ENCODE measurements at regions of chr12 and their contacts with region 1.

Region 1: DNA sequence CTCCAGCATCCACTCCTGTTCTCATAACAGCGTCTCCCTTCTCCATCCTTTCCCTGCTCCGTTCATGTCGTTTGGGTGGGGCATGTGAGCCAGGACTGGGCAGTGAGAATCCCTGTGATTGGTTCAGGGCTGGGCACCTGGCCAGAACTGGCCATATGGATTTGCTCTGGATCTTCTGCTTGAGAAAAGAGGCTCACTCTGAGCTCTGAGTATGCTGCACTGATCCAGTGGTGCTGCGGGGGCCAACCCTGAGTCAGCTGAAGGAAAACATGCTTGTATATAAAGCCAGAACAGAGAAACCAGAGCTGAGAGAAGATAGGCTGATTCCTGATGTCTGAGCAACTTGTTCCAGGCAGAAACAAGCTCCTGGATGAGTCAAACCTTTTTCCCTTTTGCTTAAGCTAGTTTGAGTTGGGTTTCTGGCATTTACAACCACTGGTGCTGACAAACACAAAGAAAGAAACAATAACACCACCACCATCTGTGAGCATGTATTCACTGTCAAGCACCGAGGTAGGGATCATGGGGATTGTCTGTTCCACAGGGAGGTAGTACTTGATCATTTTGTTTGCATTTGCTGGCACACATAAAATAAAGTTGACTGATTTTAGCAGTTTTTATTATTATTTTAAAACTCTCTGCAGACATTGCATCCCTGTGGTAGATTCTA is 14.0 kb upstream of the HPD start:
- DNase-seq: no peak
- H3K4me3 ChIP-seq: no peak overlapping the region
- H3K27ac ChIP-seq: no peak overlapping the region
- H3K4me1 ChIP-seq: no peaks in the 10 kb centered on the region
- H3K27me3 ChIP-seq: no peaks in the 10 kb centered on the region
- CTCF ChIP-seq: no peak
- EP300 ChIP-seq: no peak
- POLR2A ChIP-seq: no peak
- RAD21 ChIP-seq: no peak

Region 2: GRCh38 chr12:121816930-121817647 is 55.6 kb before region 1 on chr12:
- CTCF ChIA-PET with region 1: no interaction called
- POLR2A ChIA-PET with region 1: no interaction called
- DNase-seq: no peak
- H3K4me3 ChIP-seq: no peak overlapping the region
- H3K27ac ChIP-seq: no peak overlapping the region
- H3K4me1 ChIP-seq: peaks cover 0 to 9% (median 0%) of the 10 kb centered on the region in 4 experiments; a peak in 3 of 7 replicates
- H3K27me3 ChIP-seq: no peaks in the 10 kb centered on the region
- CTCF ChIP-seq: no peak
- EP300 ChIP-seq: no peak
- POLR2A ChIP-seq: no peak
- RAD21 ChIP-seq: no peak

Region 3: GRCh38 chr12:121858662-121859572 is 13.8 kb before region 1 on chr12 and contains the start of gene HPD:
- CTCF ChIA-PET with region 1: interaction called, 11 read pairs
- POLR2A ChIA-PET with region 1: interaction called, 4 read pairs
- DNase-seq: no peak
- H3K4me3 ChIP-seq: no peak within 1 kb of the TSS
- H3K27ac ChIP-seq: peak within 1 kb of the TSS; percentile 21; the same call in 1 of the 2 replicates
- H3K4me1 ChIP-seq: peaks cover 0 to 17% (median 11%) of the 10 kb centered on the region in 4 experiments; a peak in 5 of 7 replicates
- H3K27me3 ChIP-seq: no peaks in the 10 kb centered on the region; a peak in 1 of 7 replicates
- CTCF ChIP-seq: no peak
- EP300 ChIP-seq: no peak
- POLR2A ChIP-seq: no peak
- RAD21 ChIP-seq: no peak
- total RNA-seq, gene HPD: 0.38 and 0.56 TPM in 2 replicates

Region 4: DNA sequence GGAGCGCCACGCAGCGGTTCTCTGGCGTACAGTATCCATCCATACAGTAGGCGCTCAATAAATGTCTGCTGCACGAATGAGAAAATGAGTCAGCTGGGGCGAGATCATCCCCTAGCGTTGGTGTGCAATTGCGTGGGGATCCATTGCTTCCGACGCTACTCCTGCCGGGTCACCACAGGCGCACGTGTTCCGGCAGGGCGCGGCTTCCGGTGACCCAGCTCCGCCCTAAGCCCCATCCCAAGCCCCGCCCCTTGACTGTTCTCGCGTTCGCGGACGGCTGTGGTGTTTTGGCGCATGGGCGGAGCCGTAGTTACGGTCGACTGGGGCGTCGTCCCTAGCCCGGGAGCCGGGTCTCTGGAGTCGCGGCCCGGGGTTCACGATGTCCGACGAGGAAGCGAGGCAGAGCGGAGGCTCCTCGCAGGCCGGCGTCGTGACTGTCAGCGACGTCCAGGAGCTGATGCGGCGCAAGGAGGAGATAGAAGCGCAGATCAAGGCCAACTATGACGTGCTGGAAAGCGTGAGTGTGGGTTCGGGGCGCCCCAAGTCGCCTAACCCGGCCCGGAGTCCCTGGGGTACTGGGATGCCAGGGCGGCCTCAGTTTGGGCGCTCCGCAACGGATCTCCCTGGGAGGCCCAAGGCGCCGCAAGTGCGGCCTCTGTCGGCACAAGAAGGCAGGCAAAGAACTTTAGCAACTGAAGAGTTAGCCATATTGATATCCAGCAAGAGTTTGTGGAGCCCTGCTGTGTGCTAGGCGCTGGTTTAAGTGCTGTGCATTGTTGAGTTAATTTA is 16.0 kb after region 1 on chr12 and contains the start of gene PSMD9:
- CTCF ChIA-PET with region 1: interaction called, 10 read pairs
- POLR2A ChIA-PET with region 1: interaction called, 3 read pairs
- DNase-seq: peak; percentile 94 to 99
- H3K4me3 ChIP-seq: peak within 1 kb of the TSS; percentile 64 to 79 (median 74)
- H3K27ac ChIP-seq: peak within 1 kb of the TSS; percentile 83; the same call in 1 of the 2 replicates
- H3K4me1 ChIP-seq: peaks cover 0 to 5% (median 1%) of the 10 kb centered on the region in 4 experiments; a peak in 4 of 7 replicates
- H3K27me3 ChIP-seq: peaks cover 0 to 2% (median 1%) of the 10 kb centered on the region in 4 experiments; a peak in 3 of 7 replicates
- CTCF ChIP-seq: peak; percentile 59 to 83 (median 75)
- EP300 ChIP-seq: peak in 1 of 2 experiments; percentile 86; a peak in 1 of 3 replicates
- POLR2A ChIP-seq: peak in 1 of 2 experiments; percentile 75; a peak in 2 of 3 replicates
- RAD21 ChIP-seq: peak; percentile 52 to 68
- total RNA-seq, gene PSMD9: 28.8 and 33.1 TPM in 2 replicates

Region 5: DNA sequence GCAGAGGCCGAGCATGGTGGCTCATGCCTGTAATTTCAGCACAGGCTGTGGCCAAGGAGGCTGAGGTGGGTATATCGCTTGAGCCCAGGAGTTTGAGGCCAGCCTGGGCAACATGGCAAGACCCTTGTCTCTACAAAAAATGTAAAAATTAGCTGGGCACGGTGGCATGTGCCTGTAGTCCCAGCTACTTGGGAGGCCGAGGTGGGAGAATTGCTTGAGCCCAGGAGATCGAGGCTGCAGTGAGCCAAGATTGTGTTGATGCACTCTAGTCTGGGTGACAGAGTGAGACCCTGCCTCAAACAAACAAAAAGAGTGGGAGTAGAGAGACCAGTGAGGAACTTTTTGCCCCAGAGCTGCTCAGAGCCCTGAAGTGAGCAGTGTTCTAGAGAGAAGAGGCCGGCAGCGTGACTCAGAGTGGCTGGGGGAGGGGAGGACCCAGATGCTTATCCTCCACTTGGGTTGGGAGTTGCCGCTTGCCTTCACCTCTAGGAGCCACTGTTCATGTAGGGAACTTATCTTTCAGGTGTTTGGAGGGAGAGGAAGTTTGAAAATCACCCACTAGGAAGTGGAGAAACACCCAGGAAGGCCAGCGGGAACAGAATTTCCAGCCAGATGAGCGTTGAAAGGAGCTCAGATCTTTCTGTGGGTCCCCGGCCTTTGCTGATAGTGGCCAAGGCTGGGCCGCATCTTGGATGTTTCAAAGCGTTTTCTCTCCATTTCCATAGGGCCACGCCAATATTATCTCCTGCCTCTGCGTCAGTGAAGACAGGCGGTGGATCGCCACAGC is 61.0 kb after region 1 on chr12:
- CTCF ChIA-PET with region 1: no interaction called
- POLR2A ChIA-PET with region 1: no interaction called
- DNase-seq: peak in 1 of 2 experiments; percentile 39
- H3K4me3 ChIP-seq: no peak overlapping the region
- H3K27ac ChIP-seq: no peak overlapping the region
- H3K4me1 ChIP-seq: peaks cover 2 to 12% (median 6%) of the 10 kb centered on the region in 4 experiments
- H3K27me3 ChIP-seq: no peaks in the 10 kb centered on the region
- CTCF ChIP-seq: peak; percentile 29 to 49 (median 38); a peak in 3 of 4 replicates
- EP300 ChIP-seq: no peak
- POLR2A ChIP-seq: no peak
- RAD21 ChIP-seq: peak in 1 of 2 experiments; percentile 53; a peak in 3 of 4 replicates

Region 6: GRCh38 chr12:121949648-121950397 is 77.1 kb after region 1 on chr12:
- CTCF ChIA-PET with region 1: no interaction called
- POLR2A ChIA-PET with region 1: no interaction called
- DNase-seq: no peak
- H3K4me3 ChIP-seq: no peak overlapping the region
- H3K27ac ChIP-seq: no peak overlapping the region
- H3K4me1 ChIP-seq: peaks cover 0 to 9% (median 2%) of the 10 kb centered on the region in 4 experiments; a peak in 1 of 7 replicates
- H3K27me3 ChIP-seq: no peaks in the 10 kb centered on the region
- CTCF ChIP-seq: no peak
- EP300 ChIP-seq: no peak
- POLR2A ChIP-seq: no peak
- RAD21 ChIP-seq: no peak

Measured in H1 (cell line).